ENCODE measurements at regions of chr1 and their contacts with region 1.

Region 1: DNA sequence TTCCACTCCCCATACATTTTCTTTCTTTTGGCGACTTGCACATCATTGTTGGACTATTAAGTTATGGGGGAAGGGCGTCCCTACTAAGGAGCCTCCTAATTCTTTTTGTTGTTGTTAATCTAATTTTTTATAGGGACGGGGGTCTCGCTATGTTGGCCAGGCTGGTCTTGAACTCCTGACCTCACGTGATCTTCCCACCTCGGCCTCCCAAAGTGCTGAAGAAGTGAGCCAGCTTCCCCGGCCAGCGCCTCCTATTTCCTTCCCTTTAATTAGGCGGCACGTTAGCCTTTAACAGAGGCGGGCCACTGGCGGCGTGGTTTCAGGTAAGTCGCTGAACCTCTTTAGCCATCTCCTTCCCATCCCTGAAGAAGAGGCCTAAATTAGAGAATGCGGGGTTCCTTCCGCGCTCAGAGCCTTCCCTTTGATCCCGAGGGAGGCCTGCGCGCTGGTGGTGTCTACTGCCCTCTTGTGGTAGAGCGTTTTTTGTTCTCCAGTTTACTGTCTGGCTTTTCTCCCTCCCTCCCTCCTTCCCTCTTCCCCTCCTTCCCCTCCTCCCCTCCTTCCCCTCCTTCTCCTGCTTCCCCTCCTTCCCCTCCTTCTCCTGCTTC is 38.1 kb downstream of the TNFRSF9 start:
- DNase-seq: peak; percentile 32
- H3K4me3 Mint-ChIP-seq: peak overlapping the region; percentile 52
- H3K27ac Mint-ChIP-seq: no peak overlapping the region
- H3K4me1 Mint-ChIP-seq: peaks cover 12% of the 10 kb centered on the region
- H3K27me3 Mint-ChIP-seq: peaks cover 2% of the 10 kb centered on the region

Region 2: DNA sequence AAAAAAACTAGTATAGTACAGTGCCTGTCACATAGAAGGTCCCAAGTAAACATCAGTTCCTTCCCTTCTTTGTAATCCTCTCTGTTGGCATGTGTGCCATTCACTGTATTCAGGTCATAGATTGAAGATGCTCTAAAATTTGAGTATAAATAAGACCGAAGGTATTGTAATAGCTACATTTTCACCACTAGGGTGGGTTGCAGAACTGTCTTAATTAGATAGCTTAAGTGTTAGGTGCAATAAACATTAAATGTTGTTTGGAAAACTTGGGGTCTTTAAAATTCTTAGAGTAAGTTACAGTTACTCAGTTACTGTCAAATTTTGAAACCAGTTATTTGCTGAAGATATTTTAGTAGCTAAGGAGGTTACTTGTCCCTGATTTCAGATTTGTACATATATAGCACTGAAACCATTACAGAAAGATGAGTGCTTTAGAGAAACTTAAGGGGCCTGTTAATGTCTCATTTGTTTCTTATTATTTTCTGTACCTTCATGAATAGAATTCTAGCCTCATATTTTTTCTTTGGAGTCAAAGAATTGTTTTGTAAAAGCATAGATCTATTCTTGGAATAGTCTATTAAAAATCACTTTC is 94.2 kb before region 1 on chr1:
- intact Hi-C with region 1: loop called (anchors 1 kb)
- DNase-seq: no peak
- H3K4me3 Mint-ChIP-seq: no peak overlapping the region
- H3K27ac Mint-ChIP-seq: no peak overlapping the region
- H3K4me1 Mint-ChIP-seq: peaks cover 2% of the 10 kb centered on the region
- H3K27me3 Mint-ChIP-seq: no peaks in the 10 kb centered on the region

Region 3: DNA sequence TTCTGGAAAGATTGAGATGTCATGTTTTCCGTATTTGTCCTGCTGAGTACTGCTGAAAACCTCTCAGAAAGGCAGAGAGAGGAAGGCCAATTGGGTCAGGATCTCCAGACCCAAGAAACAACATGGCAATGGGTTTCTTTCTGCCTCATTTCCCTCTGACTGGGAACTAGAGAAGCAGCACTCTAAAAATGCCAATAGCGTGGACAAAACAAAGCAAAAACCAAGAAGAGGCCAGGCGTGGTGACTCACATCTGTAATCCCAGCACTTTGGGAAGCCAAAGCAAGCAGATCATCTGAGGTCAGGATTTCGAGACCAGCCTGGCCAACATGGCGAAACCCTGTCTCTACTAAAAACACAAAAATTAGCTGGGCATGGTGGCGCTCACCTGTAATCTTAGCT is 19.7 kb after region 1 on chr1:
- intact Hi-C with region 1: no loop called
- DNase-seq: no peak
- H3K4me3 Mint-ChIP-seq: no peak overlapping the region
- H3K27ac Mint-ChIP-seq: peak overlapping the region; percentile 43
- H3K4me1 Mint-ChIP-seq: peaks cover 26% of the 10 kb centered on the region
- H3K27me3 Mint-ChIP-seq: no peaks in the 10 kb centered on the region

Region 4: DNA sequence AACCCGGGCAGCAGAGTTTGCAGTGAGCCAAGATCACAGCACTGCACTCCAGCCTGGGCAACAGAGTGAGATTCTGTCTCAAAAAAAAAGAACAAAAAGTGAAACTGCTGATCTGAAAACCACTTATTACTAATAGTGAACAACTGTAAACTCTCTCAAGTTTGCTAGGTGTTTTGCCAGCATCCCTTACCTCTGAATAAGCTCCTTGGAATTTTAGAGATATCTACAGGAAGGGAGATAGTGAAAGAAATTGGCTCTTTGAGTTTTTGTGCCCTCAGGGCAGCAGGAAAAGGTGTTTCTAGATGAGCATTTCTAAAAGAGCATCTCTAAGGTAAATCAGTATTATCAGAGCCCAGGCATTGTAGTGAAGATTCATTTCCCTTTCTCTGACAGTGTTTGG is 86.0 kb after region 1 on chr1:
- intact Hi-C with region 1: no loop called
- DNase-seq: no peak
- H3K4me3 Mint-ChIP-seq: no peak overlapping the region
- H3K27ac Mint-ChIP-seq: no peak overlapping the region
- H3K4me1 Mint-ChIP-seq: peaks cover 2% of the 10 kb centered on the region
- H3K27me3 Mint-ChIP-seq: no peaks in the 10 kb centered on the region